GM12878 (cell line): ENCODE measurements at regions of chr6 and their contacts with region 1.

Region 1: GRCh38 chr6:127291495-127291894 is 24.8 kb downstream of the RNF146 start:
- DNase-seq: peak; percentile 39
- ATAC-seq: peak; percentile 95
- H3K4me3 ChIP-seq: no peak overlapping the region
- H3K27ac ChIP-seq: peak overlapping the region; percentile 15; the same call in 1 of the 2 replicates
- H3K4me1 ChIP-seq: peaks cover 13% of the 10 kb centered on the region; the same call in 1 of the 2 replicates
- H3K27me3 ChIP-seq: no peaks in the 10 kb centered on the region
- CTCF ChIP-seq: no peak
- EP300 ChIP-seq: peak in 1 of 2 experiments; percentile 50; a peak in 1 of 4 replicates
- POLR2A ChIP-seq: no peak
- RAD21 ChIP-seq: no peak

Region 2: DNA sequence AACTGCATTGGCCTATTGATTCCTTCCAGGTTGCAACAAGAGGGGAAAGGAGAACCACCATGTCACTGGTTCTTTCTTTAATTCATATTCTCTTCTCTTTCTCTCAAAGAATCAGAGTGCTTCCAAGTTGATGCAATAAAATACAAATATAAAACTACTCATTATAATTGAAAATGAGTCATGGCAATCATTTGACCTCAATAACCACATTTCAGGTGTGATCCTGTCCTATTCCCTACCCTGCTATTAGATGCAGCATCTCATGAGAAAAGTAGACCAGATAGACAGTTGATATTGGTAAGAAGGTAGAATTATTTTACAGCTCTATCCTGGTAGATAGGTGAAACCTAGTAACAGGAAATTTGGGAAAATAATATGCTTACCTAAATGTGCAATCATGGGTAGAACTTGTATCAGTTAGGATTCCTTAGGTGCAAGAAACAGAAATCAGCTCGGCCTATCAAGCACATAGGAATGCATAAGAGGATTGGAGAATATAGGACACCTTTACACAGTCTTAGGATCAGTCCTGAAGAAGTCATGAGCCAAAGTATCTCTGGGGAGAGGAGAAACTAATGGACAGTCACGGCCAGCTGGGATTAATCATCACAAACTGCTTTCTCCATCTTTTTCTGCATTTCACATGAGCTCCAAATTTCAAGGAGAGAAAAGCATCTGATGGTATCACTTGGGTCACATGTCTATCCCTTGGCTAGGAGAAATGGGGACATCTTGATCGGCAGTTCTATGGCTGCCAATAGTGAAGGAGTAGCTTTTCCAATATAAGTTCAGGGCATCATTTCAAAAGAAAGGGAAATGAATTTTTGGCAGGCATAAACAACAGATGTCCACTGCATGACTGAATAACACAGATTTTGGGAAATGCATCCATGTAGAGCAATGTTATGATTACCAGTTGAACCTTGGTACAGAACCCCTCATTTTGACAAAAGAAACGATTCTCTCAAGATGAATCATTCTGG is 44.1 kb before region 1 on chr6:
- CTCF ChIA-PET with region 1: no interaction called
- POLR2A ChIA-PET with region 1: no interaction called
- RAD21 ChIA-PET with region 1: no interaction called
- SMC1A ChIA-PET with region 1: no interaction called
- in situ Hi-C with region 1: no loop called
- intact Hi-C with region 1: no loop called
- DNase-seq: no peak
- ATAC-seq: no peak
- H3K4me3 ChIP-seq: no peak overlapping the region
- H3K27ac ChIP-seq: no peak overlapping the region
- H3K4me1 ChIP-seq: no peaks in the 10 kb centered on the region
- H3K27me3 ChIP-seq: no peaks in the 10 kb centered on the region; a peak in 1 of 4 replicates
- CTCF ChIP-seq: no peak
- EP300 ChIP-seq: no peak
- POLR2A ChIP-seq: no peak
- RAD21 ChIP-seq: no peak

Region 3: GRCh38 chr6:127272576-127272975 is 18.9 kb before region 1 on chr6:
- CTCF ChIA-PET with region 1: interaction called, 24 read pairs
- POLR2A ChIA-PET with region 1: interaction called, 24 read pairs
- RAD21 ChIA-PET with region 1: interaction called, 19 read pairs
- SMC1A ChIA-PET with region 1: interaction called, 16 read pairs
- in situ Hi-C with region 1: no loop called
- intact Hi-C with region 1: loop called (anchors 2 kb)
- DNase-seq: no peak
- ATAC-seq: no peak
- H3K4me3 ChIP-seq: no peak overlapping the region
- H3K27ac ChIP-seq: no peak overlapping the region
- H3K4me1 ChIP-seq: no peaks in the 10 kb centered on the region
- H3K27me3 ChIP-seq: no peaks in the 10 kb centered on the region
- CTCF ChIP-seq: no peak
- EP300 ChIP-seq: no peak
- POLR2A ChIP-seq: no peak
- RAD21 ChIP-seq: no peak